Aorta (tissue), 5 donors: ENCODE measurements at regions of chr16 and their contacts with region 1.

Region 1: DNA sequence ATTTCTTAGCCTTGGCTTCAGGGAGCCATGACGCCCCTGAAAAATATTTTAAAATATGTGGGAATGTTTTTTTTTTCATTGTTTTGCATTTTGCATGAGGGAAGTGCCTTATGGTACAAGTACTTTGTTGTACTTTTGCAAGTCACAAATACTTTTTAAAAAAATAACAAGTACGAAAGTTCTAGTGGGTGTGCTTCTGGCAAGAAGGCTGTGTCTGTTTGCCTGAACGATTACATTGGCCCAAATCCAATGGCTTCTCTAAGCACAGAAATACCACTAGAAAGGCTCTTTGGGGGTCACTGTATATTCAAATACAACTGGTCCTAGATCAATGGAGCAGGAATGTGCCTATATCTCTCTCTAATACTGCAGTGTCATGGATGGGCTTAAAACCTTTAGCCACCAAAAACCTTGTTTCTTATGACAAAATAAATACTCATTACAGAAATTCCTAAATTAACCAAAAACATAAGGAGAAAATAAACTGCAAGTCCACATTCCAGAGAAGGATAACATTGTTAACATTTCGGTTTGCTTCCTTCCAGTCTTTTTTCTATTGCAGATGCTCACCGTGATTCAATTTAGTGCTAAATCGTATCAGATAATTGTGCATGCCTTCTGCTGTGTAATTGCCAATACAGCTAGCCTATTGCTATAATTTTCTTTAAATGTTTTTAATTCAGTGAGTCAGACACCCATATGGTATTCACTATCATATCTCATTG is 97.4 kb downstream of the VAT1L start:
- DNase-seq: no peak
- ATAC-seq: no peak
- H3K4me3 ChIP-seq: no peak overlapping the region
- H3K27ac ChIP-seq: peak overlapping the region; percentile 39 to 45
- H3K4me1 ChIP-seq: peaks cover 6 to 10% of the 10 kb centered on the region in 2 donors
- H3K27me3 ChIP-seq: no peaks in the 10 kb centered on the region

Region 2: DNA sequence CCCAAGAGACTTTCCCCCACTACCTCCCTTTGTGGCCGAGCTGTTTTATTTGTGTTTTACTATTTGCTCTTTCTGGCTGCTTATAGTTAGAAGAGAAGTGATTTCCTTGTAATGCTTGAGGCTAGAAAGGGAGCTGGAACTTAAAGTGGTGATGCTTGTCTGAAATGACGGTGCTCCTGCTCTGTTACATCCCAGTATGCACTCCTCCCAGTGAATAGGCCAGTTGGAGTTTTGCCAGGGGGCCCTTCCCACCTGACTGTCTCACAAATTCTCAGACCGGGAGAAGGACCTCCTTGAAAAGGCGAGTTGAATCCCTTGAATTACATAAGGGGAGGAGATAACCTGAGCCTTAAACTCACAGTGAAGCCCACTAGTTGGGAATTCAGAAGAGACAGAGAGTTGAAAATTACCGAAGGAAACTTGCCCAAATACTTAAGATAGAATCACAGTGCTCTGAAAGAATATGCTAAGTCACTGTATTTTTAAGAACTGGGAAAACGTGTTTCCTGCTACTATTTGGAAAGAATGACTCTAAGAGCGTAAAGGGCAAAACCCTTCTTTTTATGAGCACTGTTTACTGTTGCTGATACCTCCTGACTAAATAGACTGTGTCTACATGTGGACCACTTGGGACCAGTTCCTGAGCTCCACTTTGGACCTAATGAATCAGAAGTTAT is 51.9 kb after region 1 on chr16:
- intact Hi-C with region 1: loop called in 1 of 2 experiments (anchors 5 kb)
- DNase-seq: peak; percentile 50 to 77
- ATAC-seq: peak; percentile 66
- H3K4me3 ChIP-seq: no peak overlapping the region
- H3K27ac ChIP-seq: peak overlapping the region in 1 of 2 donors; percentile 81
- H3K4me1 ChIP-seq: peaks cover 0 to 7% of the 10 kb centered on the region in 2 donors
- H3K27me3 ChIP-seq: no peaks in the 10 kb centered on the region